Activated CD8-positive, alpha-beta memory T cell treated with anti-CD3 and anti-CD28 coated beads, Interleukin-2, amount 10 ng/mL, durations not matched to agents 7 days and 5 days (primary cell): ENCODE measurements at regions of chr6 and their contacts with region 1.

Region 1: GRCh38 chr6:70686548-70687133 is 19.0 kb downstream of the SMAP1 start:
- DNase-seq: no peak
- ATAC-seq: peak; percentile 27
- H3K4me3 Mint-ChIP-seq: no peak overlapping the region
- H3K27ac Mint-ChIP-seq: no peak overlapping the region
- H3K4me1 Mint-ChIP-seq: peaks cover 25% of the 10 kb centered on the region
- H3K27me3 Mint-ChIP-seq: no peaks in the 10 kb centered on the region

Region 2: DNA sequence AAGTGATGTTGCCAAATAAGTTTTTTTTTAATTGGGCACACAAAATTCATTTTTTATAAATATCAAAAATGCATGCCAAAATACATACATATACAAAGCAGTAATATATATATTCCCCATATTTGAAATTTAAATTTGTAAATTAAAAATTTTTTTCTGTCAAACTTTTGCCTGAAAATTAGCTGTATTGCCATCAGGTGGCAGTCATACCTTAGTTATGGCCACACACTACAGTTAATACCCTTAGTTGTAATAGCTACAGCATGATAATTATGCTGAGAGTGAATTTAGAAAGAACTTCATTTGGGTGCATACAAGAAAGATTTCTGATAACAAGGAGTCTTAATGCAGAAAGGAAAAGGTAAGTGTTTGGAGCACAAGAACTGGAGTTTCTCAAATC is 166.1 kb before region 1 on chr6:
- CTCF ChIA-PET with region 1: interaction called, 14 read pairs
- DNase-seq: no peak
- ATAC-seq: no peak
- H3K4me3 Mint-ChIP-seq: no peak overlapping the region
- H3K27ac Mint-ChIP-seq: no peak overlapping the region
- H3K4me1 Mint-ChIP-seq: no peaks in the 10 kb centered on the region
- H3K27me3 Mint-ChIP-seq: no peaks in the 10 kb centered on the region

Region 3: DNA sequence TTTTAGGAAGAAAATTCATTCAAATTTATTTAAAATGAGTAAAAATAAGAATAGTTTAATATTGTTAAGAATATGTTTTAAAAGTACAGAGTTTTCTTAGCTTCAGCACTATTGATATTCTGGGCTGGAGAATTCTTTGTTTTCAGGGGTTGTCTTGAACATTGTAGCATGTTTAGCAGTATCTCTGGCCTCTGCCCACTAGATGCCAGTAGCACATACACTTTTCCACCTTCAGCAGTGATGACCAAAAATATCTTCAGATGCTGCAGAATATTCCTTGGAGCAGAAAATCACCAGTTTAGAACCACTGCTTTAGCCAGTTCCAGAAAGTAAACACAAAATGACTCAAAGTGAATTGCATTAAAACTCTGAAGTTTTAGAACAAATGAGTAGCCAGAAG is 139.3 kb before region 1 on chr6:
- CTCF ChIA-PET with region 1: interaction called, 27 read pairs
- DNase-seq: no peak
- ATAC-seq: no peak
- H3K4me3 Mint-ChIP-seq: no peak overlapping the region
- H3K27ac Mint-ChIP-seq: no peak overlapping the region
- H3K4me1 Mint-ChIP-seq: no peaks in the 10 kb centered on the region
- H3K27me3 Mint-ChIP-seq: no peaks in the 10 kb centered on the region

Region 4: DNA sequence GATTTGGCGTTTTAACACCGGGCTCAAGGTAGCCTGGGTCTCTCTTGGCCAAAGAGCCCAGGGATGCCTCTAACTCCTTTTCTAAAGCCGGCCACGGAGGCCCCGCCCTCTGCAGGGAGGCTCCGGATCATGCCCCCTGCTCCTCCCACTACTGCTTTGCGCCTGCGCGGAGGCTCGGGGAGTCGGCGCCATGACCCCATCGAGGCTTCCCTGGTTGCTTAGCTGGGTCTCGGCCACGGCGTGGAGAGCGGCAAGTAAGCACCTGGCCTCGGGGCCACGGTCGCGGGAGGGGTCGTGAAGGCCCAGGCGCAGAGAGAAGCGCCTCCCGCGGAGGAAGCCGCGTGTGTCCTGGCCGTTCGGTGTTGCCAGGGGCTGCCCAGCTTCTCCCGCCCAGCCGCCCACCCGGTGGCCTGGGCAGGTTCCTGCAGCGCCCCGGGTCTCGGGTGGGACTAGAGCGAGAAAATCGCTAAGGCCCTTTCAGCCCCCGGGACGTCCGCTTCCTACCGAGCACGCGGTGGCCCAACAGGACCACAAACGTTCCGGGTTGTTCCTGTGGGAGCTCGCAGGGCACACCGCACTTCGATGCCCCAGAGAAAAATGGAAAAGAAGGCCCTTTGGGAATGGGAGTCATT is 119.8 kb before region 1 on chr6 and contains the start of gene SDHAF4:
- CTCF ChIA-PET with region 1: interaction called, 16 read pairs
- DNase-seq: peak; percentile 95
- ATAC-seq: peak; percentile 100
- H3K4me3 Mint-ChIP-seq: peak within 1 kb of the TSS; percentile 81
- H3K27ac Mint-ChIP-seq: peak within 1 kb of the TSS; percentile 83
- H3K4me1 Mint-ChIP-seq: peaks cover 17% of the 10 kb centered on the region
- H3K27me3 Mint-ChIP-seq: no peaks in the 10 kb centered on the region
- total RNA-seq, gene SDHAF4: 12.2 to 15.5 TPM

Region 5: DNA sequence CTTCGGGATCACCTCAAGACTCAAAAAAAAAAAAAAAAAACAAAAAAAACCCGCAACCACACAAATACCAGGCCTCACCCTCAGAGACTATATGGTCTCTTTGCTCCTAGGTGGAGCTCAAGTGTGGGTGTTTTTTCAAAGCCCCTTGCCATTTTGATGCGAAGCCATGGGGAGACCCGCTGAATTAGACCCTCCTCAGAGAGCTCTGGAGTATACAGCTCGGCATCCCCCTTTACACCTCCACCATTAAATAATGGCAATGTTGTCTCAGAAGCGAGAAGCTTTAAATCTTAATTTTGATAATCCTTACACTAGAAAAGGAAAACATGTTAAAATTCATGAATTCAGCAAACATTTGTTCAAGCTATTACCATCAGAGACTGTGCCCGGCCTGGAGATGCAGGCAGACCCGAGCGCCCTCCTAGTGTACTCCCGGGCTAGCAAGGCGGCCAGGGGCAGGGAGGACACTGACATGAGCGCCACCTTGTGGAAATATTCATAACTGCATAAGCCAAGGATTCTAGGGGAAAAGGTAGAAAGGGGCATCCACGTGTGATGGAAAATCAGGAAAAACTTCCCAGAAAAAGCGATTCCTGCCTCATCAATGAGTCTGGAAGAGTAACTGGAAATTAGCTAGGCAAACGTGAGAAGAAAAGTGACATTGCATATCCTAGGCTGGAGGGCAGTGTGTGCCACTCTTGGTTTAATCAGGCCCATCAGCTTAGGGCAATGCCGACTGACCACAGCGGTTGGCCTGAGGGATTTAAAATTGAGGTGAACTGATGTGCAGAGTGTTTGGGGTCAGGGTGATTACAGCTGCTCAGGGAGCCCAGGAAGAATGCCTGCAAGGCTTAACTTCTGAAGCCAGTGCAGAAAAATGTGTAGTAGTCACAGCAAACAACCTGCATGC is 197.7 kb after region 1 on chr6:
- CTCF ChIA-PET with region 1: interaction called, 12 read pairs
- DNase-seq: peak; percentile 59
- ATAC-seq: peak; percentile 83
- H3K4me3 Mint-ChIP-seq: no peak overlapping the region
- H3K27ac Mint-ChIP-seq: no peak overlapping the region
- H3K4me1 Mint-ChIP-seq: no peaks in the 10 kb centered on the region
- H3K27me3 Mint-ChIP-seq: peaks cover 9% of the 10 kb centered on the region

Region 6: GRCh38 chr6:70933853-70934252 is 247.2 kb after region 1 on chr6:
- CTCF ChIA-PET with region 1: no interaction called
- DNase-seq: no peak
- ATAC-seq: no peak
- H3K4me3 Mint-ChIP-seq: no peak overlapping the region
- H3K27ac Mint-ChIP-seq: no peak overlapping the region
- H3K4me1 Mint-ChIP-seq: no peaks in the 10 kb centered on the region
- H3K27me3 Mint-ChIP-seq: peaks cover 7% of the 10 kb centered on the region